ENCODE measurements at regions of chrX and their contacts with region 1.

Region 1: GRCh38 chrX:43958529-43958928 is 14.7 kb downstream of the NDP start:
- DNase-seq: peak in 1 of 2 donors; percentile 35
- ATAC-seq: peak in 7 of 8 donors; percentile 67 to 87 (median 72)
- H3K4me3 ChIP-seq: no peak overlapping the region
- H3K27ac ChIP-seq: no peak overlapping the region
- H3K4me1 ChIP-seq: no peaks in the 10 kb centered on the region
- H3K27me3 ChIP-seq: peaks cover 0 to 74% (median 0%) of the 10 kb centered on the region in 7 donors
- CTCF ChIP-seq: peak; percentile 20 to 78 (median 71)

Region 2: GRCh38 chrX:44025555-44025954 is 67.0 kb after region 1 on chrX:
- intact Hi-C with region 1: loop called in 3 of 10 experiments (anchors 5 to 10 kb)
- DNase-seq: no peak
- ATAC-seq: no peak
- H3K4me3 ChIP-seq: no peak overlapping the region
- H3K27ac ChIP-seq: no peak overlapping the region
- H3K4me1 ChIP-seq: no peaks in the 10 kb centered on the region
- H3K27me3 ChIP-seq: peaks cover 0 to 47% (median 0%) of the 10 kb centered on the region in 7 donors
- CTCF ChIP-seq: no peak

Region 3: GRCh38 chrX:44244008-44244407 is 285.5 kb after region 1 on chrX:
- intact Hi-C with region 1: loop called (anchors 2 to 10 kb)
- DNase-seq: no peak
- ATAC-seq: no peak
- H3K4me3 ChIP-seq: no peak overlapping the region
- H3K27ac ChIP-seq: no peak overlapping the region
- H3K4me1 ChIP-seq: no peaks in the 10 kb centered on the region
- H3K27me3 ChIP-seq: peaks cover 0 to 79% (median 0%) of the 10 kb centered on the region in 7 donors
- CTCF ChIP-seq: peak in 8 of 9 donors; percentile 5 to 57 (median 43)

Region 4: DNA sequence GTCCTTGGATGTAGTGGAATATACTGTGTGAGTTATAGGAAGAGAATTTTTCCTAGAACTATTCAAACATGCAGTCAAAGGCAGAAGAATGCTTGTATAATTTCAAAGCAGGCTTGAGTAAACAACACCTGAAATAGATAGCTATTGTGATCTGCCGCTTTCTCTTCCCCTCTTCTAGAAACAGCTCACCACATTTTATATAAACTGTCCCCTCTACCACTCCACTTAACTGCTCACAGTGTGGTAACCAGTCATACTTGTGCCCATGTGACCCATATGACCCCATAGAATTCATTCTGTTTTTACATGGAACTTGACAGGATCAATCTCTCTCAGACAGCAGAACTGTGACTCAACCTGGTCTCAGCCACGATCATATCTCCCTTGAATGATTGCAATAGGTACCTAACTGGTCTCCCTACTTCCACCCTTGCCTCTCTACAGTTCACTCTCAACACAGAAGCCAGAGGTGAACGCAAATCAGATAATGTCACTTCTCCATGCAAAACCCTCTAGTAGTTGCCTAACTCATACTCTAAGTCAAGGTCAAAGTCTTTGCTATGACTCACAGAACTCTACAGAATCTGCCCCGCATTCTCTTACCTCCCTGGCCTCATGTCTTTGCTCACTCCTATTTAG is 470.6 kb after region 1 on chrX:
- intact Hi-C with region 1: no loop called
- DNase-seq: no peak
- ATAC-seq: no peak
- H3K4me3 ChIP-seq: no peak overlapping the region
- H3K27ac ChIP-seq: no peak overlapping the region
- H3K4me1 ChIP-seq: no peaks in the 10 kb centered on the region
- H3K27me3 ChIP-seq: peaks cover 0 to 33% (median 0%) of the 10 kb centered on the region in 7 donors
- CTCF ChIP-seq: no peak

Region 5: GRCh38 chrX:44529310-44529709 is 570.8 kb after region 1 on chrX:
- intact Hi-C with region 1: no loop called
- DNase-seq: no peak
- ATAC-seq: no peak
- H3K4me3 ChIP-seq: no peak overlapping the region
- H3K27ac ChIP-seq: no peak overlapping the region
- H3K4me1 ChIP-seq: no peaks in the 10 kb centered on the region
- H3K27me3 ChIP-seq: no peaks in the 10 kb centered on the region
- CTCF ChIP-seq: no peak

Region 6: DNA sequence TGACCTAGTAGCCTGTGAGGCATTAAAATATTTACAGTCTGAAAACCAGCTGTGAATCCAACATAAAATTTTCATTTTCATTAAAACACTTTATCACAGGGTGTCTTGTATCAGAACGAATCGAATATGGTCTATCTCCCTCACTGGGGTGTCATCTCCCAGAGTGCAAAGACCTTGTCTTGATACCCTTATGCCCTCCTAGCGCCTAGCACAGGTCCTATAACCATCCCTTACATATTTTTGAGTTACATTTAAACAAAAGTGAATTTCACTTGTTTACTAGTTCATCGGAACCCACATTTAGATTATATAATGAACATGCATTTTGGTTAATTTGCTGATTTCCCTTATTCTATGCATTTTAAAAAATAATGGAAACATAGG is 1228.1 kb after region 1 on chrX:
- intact Hi-C with region 1: loop called in 2 of 10 experiments (anchors 5 to 10 kb)
- DNase-seq: no peak
- ATAC-seq: peak in 2 of 8 donors; percentile 10
- H3K4me3 ChIP-seq: peak overlapping the region in 7 of 10 donors; percentile 10 to 53 (median 46)
- H3K27ac ChIP-seq: peak overlapping the region in 2 of 10 donors; percentile 16 to 52
- H3K4me1 ChIP-seq: peaks cover 0 to 21% (median 8%) of the 10 kb centered on the region in 9 donors
- H3K27me3 ChIP-seq: peaks cover 0 to 33% (median 0%) of the 10 kb centered on the region in 7 donors
- CTCF ChIP-seq: no peak

Measured in heart right ventricle (tissue), 16 donors.